ENCODE measurements at regions of chr12 and their contacts with region 1.

Region 1: DNA sequence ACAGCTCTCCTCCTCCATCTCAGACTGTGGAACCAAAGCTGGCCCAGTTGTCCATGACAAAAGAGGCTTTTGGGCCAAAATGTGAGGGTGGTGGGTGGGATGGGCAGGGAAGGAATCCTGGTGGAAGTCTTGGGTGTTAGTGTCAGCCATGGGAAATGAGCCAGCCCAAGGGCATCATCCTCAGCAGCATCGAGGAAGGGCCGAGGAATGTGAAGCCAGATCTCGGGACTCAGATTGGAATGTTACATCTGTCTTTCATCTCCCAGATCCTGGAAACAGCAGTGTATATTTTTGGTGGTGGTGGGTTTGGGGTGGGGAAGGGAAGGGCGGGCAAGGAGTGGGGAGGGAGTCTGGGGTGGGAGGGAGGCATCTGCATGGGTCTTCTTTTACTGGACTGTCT is 11.8 kb upstream of the TAMALIN start:
- DNase-seq: no peak
- H3K4me3 ChIP-seq: no peak overlapping the region
- H3K27ac ChIP-seq: no peak overlapping the region
- H3K4me1 ChIP-seq: peaks cover 0 to 2% (median under 1%) of the 10 kb centered on the region in 4 experiments; a peak in 3 of 7 replicates
- H3K27me3 ChIP-seq: no peaks in the 10 kb centered on the region
- CTCF ChIP-seq: no peak
- EP300 ChIP-seq: no peak
- POLR2A ChIP-seq: no peak
- RAD21 ChIP-seq: no peak

Region 2: GRCh38 chr12:51898937-51899336 is 96.0 kb before region 1 on chr12:
- CTCF ChIA-PET with region 1: interaction called, 11 read pairs
- POLR2A ChIA-PET with region 1: no interaction called
- DNase-seq: no peak
- H3K4me3 ChIP-seq: no peak overlapping the region
- H3K27ac ChIP-seq: no peak overlapping the region
- H3K4me1 ChIP-seq: no peaks in the 10 kb centered on the region
- H3K27me3 ChIP-seq: no peaks in the 10 kb centered on the region
- CTCF ChIP-seq: no peak
- EP300 ChIP-seq: no peak
- POLR2A ChIP-seq: no peak
- RAD21 ChIP-seq: no peak

Region 3: GRCh38 chr12:51905471-51906429 is 89.2 kb before region 1 on chr12:
- CTCF ChIA-PET with region 1: interaction called, 10 read pairs
- POLR2A ChIA-PET with region 1: no interaction called
- DNase-seq: no peak
- H3K4me3 ChIP-seq: no peak overlapping the region
- H3K27ac ChIP-seq: no peak overlapping the region
- H3K4me1 ChIP-seq: no peaks in the 10 kb centered on the region
- H3K27me3 ChIP-seq: peaks cover 4 to 25% (median 20%) of the 10 kb centered on the region in 4 experiments
- CTCF ChIP-seq: no peak
- EP300 ChIP-seq: no peak
- POLR2A ChIP-seq: no peak
- RAD21 ChIP-seq: no peak

Region 4: DNA sequence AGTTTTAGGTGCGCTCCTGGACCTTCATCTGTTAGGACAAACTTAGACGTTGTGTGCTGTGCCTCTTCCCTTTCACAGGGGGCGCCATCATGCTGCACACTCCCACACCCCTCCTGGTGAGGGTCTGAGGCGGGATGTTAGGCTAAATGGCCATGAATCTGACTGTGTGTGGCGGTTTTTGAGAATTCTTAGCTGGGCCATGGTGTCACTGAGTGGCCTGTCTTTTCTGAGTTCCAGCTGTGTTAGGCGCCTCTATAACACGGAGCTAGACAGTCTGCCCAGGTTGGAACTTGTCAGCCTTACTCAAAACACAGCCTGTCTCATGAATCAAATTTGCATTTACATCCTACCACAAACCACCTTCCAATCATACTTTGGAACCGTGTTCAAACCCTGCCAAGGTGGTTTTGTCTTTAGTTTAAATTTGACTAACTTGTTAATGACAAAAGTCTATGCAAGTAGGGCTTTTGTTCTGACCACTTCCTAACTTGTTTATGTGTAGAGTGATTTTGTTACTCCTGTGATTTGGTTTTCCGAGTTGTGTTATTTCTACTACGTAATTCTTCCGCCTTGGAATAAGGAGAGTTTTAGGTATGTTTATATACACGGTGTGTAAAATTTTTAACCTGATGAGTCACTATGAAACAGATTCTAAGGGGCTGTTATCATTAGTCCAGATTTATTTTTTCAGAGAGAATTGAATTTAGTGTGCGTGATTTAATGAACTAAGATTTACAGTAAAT is 23.9 kb before region 1 on chr12:
- CTCF ChIA-PET with region 1: interaction called, 25 read pairs
- POLR2A ChIA-PET with region 1: no interaction called
- DNase-seq: peak in 1 of 2 experiments; percentile 62
- H3K4me3 ChIP-seq: no peak overlapping the region
- H3K27ac ChIP-seq: no peak overlapping the region
- H3K4me1 ChIP-seq: peaks cover 3 to 10% (median 6%) of the 10 kb centered on the region in 4 experiments; a peak in 5 of 7 replicates
- H3K27me3 ChIP-seq: no peaks in the 10 kb centered on the region
- CTCF ChIP-seq: peak; percentile 85 to 97 (median 95)
- EP300 ChIP-seq: no peak
- POLR2A ChIP-seq: no peak
- RAD21 ChIP-seq: peak; percentile 34 to 50

Region 5: DNA sequence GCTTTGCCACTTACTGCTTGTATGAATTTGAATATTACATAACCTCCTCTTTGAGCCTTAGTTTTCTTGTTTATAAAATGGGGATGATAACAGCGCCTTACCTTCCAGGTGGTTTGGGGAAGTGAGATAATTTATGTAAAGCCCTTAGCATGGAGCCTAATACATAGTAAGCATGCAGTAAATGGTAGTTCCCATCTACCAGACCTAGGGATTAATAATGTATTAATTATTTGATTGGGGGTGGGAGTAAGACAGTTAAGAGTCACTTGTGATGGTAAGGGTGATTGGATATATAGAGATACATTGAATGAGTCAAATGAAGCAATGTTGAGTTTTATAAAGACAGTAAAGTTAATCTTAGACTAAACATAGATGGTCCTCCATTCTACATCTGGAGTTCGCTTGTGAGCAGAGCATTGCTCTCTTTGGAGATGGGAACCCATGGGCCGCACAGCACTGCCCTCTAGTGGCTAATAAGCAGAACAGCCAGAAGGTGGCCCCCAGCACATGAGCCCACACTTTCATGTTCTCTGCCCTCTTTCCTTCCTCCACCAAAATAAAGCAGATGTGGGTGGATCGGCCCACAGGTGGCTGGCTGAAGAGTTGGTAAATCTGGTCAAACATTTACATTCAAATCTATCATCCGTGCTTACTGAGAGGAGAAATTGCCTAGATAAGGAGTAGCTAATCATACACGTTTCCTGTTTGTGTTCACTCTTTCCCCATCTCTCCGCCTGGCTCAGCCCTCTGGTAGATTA is 14.7 kb before region 1 on chr12:
- CTCF ChIA-PET with region 1: interaction called, 70 read pairs
- POLR2A ChIA-PET with region 1: interaction called, 5 read pairs
- DNase-seq: peak in 1 of 2 experiments; percentile 66
- H3K4me3 ChIP-seq: no peak overlapping the region
- H3K27ac ChIP-seq: no peak overlapping the region
- H3K4me1 ChIP-seq: peaks cover 0 to 1% (median 0%) of the 10 kb centered on the region in 4 experiments; a peak in 1 of 7 replicates
- H3K27me3 ChIP-seq: no peaks in the 10 kb centered on the region
- CTCF ChIP-seq: peak; percentile 94 to 97 (median 96)
- EP300 ChIP-seq: no peak
- POLR2A ChIP-seq: no peak
- RAD21 ChIP-seq: peak; percentile 83 to 88

Region 6: DNA sequence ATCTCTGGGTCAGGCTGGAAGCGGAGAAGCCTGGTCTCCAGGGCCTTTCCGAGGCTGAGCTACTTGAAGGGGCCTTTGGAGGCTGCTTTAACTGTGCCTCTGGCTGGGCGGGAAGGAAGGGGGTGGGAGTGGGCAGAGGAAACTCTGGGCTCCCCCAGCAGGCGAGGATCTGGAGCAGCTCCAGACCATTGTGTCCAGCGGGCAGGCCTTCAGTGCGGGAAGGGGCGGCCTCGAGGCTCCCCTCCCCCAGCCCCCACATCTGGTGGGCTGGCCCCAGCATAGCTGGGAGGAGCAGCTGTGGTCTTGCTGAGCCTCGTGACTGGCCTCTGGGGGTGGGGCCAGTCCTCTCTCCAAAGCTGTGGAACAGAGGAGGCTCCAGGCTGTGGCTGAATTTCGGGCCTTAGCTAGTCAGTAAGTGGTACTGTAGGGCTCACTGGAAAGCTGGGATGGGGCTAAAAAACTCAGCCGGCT is 15.2 kb after region 1 on chr12:
- CTCF ChIA-PET with region 1: interaction called, 1,249 read pairs
- POLR2A ChIA-PET with region 1: interaction called, 18 read pairs
- DNase-seq: peak; percentile 67 to 79
- H3K4me3 ChIP-seq: peak overlapping the region in 1 of 4 experiments; percentile 32; a peak in 1 of 8 replicates
- H3K27ac ChIP-seq: no peak overlapping the region; the same call in 1 of the 2 replicates
- H3K4me1 ChIP-seq: peaks cover 5 to 45% (median 24%) of the 10 kb centered on the region in 4 experiments
- H3K27me3 ChIP-seq: peaks cover 18 to 64% (median 56%) of the 10 kb centered on the region in 4 experiments
- CTCF ChIP-seq: no peak
- EP300 ChIP-seq: no peak; a peak in 1 of 3 replicates
- POLR2A ChIP-seq: peak in 1 of 2 experiments; percentile 47; a peak in 1 of 3 replicates
- RAD21 ChIP-seq: no peak

Region 7: GRCh38 chr12:52056801-52057637 is 62.1 kb after region 1 on chr12:
- CTCF ChIA-PET with region 1: no interaction called
- POLR2A ChIA-PET with region 1: no interaction called
- DNase-seq: no peak
- H3K4me3 ChIP-seq: no peak overlapping the region
- H3K27ac ChIP-seq: no peak overlapping the region
- H3K4me1 ChIP-seq: peaks cover 0 to 4% (median under 1%) of the 10 kb centered on the region in 4 experiments; a peak in 3 of 7 replicates
- H3K27me3 ChIP-seq: peaks cover 0 to 11% (median 6%) of the 10 kb centered on the region in 4 experiments; a peak in 4 of 7 replicates
- CTCF ChIP-seq: no peak
- EP300 ChIP-seq: no peak
- POLR2A ChIP-seq: no peak
- RAD21 ChIP-seq: no peak

Region 8: GRCh38 chr12:52139552-52140062 is 144.6 kb after region 1 on chr12:
- CTCF ChIA-PET with region 1: no interaction called
- POLR2A ChIA-PET with region 1: no interaction called
- DNase-seq: peak in 1 of 2 experiments; percentile 90
- H3K4me3 ChIP-seq: no peak overlapping the region
- H3K27ac ChIP-seq: no peak overlapping the region
- H3K4me1 ChIP-seq: peaks cover 0 to 11% (median 5%) of the 10 kb centered on the region in 4 experiments; a peak in 4 of 7 replicates
- H3K27me3 ChIP-seq: no peaks in the 10 kb centered on the region
- CTCF ChIP-seq: peak in 2 of 3 experiments; percentile 81 to 88; a peak in 3 of 4 replicates
- EP300 ChIP-seq: no peak
- POLR2A ChIP-seq: no peak
- RAD21 ChIP-seq: peak; percentile 76 to 87

Measured in H1 (cell line).